ENCODE measurements at regions of chr14 and their contacts with region 1.

Region 1: DNA sequence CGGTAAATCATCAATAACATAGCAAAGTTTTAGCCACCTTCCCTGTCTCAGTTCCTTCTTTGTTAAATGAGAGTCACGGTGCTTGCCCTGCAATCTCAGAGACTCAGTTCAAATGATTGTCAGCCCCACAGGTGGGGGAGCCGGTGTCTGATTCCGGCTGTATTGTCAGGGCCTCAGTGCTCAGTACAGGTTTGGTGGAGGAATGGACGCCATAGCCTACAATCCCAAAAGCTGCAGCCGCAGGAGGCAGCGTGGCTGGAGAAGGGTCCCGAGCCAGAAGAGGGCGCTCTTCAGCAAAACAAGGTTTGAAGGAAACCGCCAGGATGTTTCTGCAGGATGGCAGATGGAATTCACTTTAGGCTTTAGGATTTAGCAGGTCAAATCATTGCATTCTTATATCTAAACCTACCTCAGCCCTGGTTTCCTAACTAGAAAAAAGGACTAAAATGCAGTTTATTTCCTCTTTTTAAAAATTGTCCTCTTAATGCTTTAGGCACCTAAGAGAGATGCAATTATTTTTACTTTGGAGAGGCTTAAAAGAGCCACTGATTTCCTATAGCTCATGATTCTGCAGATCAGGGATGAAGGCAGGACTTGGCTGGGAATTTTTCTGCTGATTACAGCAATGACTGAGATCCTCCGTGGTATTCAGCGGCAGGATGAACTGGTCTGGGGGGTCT is 29.2 kb downstream of the FOS start:
- DNase-seq: peak; percentile 85 to 97
- H3K4me3 ChIP-seq: no peak overlapping the region
- CTCF ChIP-seq: peak in 1 of 3 donors; percentile 91
- POLR2A ChIP-seq: no peak

Region 2: GRCh38 chr14:74945823-74946682 is 361.8 kb before region 1 on chr14:
- intact Hi-C with region 1: no loop called
- DNase-seq: peak; percentile 67 to 95
- H3K4me3 ChIP-seq: no peak overlapping the region
- CTCF ChIP-seq: peak in 1 of 3 donors; percentile 34
- POLR2A ChIP-seq: no peak

Region 3: DNA sequence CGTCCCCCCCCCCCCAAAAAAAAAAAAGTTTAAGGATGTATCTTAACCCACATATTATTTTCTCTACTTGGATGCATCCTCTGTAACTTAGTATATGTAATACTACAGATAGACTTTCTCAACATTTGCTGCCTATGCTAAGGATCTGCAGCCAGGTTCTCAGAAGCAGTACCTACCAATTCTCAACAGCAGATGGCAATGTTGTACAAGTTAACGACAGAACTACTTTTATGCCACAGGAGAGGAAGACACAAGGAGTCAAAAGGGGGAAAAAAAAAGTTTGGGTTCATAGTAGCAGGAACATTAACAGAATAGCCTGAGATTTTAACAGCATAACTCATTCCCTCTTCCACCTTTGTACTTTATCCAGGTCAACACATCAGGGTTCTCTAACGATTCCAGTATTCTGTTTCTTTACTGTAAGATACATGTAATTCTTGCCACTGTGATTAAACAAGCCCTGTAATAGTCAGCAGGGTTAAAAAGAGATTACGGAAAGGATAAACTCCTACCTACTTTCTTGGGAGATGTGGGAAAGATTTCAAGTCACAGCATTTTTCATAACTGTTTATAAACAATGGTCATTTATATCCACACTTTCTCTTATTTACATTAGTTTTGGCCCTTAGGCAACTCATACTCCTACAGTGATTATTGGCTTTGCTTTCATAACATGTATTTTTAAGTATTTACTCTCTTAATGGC is 175.3 kb before region 1 on chr14:
- intact Hi-C with region 1: loop called (anchors 2 kb)
- DNase-seq: peak in 1 of 2 donors; percentile 79
- H3K4me3 ChIP-seq: no peak overlapping the region
- CTCF ChIP-seq: no peak
- POLR2A ChIP-seq: no peak

Region 4: GRCh38 chr14:75479770-75480600 is 172.1 kb after region 1 on chr14:
- intact Hi-C with region 1: loop called (anchors 5 kb)
- DNase-seq: peak in 1 of 2 donors; percentile 56
- H3K4me3 ChIP-seq: no peak overlapping the region
- CTCF ChIP-seq: no peak
- POLR2A ChIP-seq: no peak

Region 5: DNA sequence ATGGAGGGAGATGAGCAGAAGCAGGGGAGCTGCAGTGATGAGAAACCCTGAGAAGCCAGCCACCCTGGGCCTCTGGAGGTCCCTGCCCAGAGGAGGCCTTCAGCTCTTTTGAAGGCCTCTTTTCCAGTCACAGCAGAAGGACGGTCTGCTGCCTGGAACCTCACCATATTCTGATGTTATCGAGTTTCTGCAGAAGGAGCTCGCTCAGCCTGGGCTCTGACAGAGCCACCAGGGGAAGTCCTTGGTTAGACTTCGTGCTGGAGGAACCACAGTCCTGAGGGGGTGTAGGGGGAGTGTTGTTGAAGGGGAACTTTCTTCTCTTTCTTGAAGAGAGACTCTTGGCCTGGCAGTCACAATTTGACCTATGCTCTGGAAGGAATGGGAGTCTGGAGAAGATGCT is 189.4 kb after region 1 on chr14:
- intact Hi-C with region 1: loop called (anchors 5 kb)
- DNase-seq: peak in 1 of 2 donors; percentile 78
- H3K4me3 ChIP-seq: no peak overlapping the region
- CTCF ChIP-seq: no peak
- POLR2A ChIP-seq: no peak

Region 6: GRCh38 chr14:75560962-75561432 is 253.2 kb after region 1 on chr14:
- intact Hi-C with region 1: loop called (anchors 5 kb)
- DNase-seq: peak; percentile 75 to 91
- H3K4me3 ChIP-seq: no peak overlapping the region
- CTCF ChIP-seq: no peak
- POLR2A ChIP-seq: no peak

Measured in lower leg skin (tissue), 4 donors.